Lower leg skin (tissue), 4 donors: ENCODE measurements at regions of chr7 and their contacts with region 1.

Region 1: GRCh38 chr7:38222481-38223096 is 44.5 kb downstream of the STARD3NL start:
- DNase-seq: peak in 1 of 2 donors; percentile 26
- H3K4me3 ChIP-seq: no peak overlapping the region
- CTCF ChIP-seq: peak in 1 of 3 donors; percentile 91
- POLR2A ChIP-seq: no peak

Region 2: GRCh38 chr7:38107486-38107893 is 115.1 kb before region 1 on chr7:
- intact Hi-C with region 1: loop called (anchors 5 kb)
- DNase-seq: peak in 1 of 2 donors; percentile 52
- H3K4me3 ChIP-seq: no peak overlapping the region
- CTCF ChIP-seq: no peak
- POLR2A ChIP-seq: no peak

Region 3: GRCh38 chr7:38257350-38257677 is 34.7 kb after region 1 on chr7:
- intact Hi-C with region 1: no loop called
- DNase-seq: no peak
- H3K4me3 ChIP-seq: no peak overlapping the region
- CTCF ChIP-seq: no peak
- POLR2A ChIP-seq: no peak